IMR-90 (cell line): ENCODE measurements at regions of chr6 and their contacts with region 1.

Region 1: GRCh38 chr6:129989396-129989795 is 29.0 kb upstream of the L3MBTL3 start:
- DNase-seq: no peak
- ATAC-seq: no peak
- H3K4me3 ChIP-seq: no peak overlapping the region
- H3K27ac ChIP-seq: no peak overlapping the region
- H3K4me1 ChIP-seq: no peaks in the 10 kb centered on the region
- H3K27me3 ChIP-seq: peaks cover 4% of the 10 kb centered on the region; the same call in 1 of the 2 replicates
- CTCF ChIP-seq: no peak
- POLR2A ChIP-seq: no peak
- RAD21 ChIP-seq: no peak

Region 2: DNA sequence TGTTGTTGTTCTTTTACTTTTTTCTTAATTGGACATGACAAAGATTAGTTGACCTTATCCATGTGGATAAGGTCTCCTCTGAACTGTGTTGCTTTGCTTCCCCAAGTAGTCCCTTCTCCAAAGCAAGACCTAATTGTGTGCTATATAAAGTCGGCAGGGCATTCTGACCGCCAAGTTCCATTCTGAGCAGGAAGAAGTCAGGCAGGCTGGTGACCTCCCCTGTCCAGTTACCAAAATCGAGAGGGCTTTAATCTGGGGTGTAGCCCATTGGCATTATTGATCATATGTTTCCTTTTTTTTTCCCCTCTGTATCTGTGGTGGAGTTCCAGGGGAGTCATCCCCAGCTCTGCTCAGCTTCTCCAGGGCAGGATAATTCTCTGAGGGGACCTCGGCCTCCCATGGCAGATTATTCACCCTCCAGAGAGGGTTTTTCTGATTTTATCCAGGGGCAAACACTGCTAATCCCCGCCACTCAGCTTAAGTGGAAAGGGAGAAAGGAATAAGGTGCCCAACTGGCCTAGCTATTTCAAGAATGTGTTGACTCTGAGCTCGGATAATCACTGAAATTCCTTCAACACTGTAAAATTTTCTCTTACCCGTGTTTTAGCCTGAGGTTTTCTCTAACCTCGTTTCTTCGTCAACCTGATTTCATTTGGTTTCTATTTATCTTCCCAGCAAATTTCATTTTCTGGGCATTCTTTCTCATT is 42.8 kb before region 1 on chr6:
- CTCF ChIA-PET with region 1: no interaction called
- POLR2A ChIA-PET with region 1: interaction called, 15 read pairs
- dilution Hi-C with region 1: no loop called
- in situ Hi-C with region 1: no loop called
- intact Hi-C with region 1: no loop called
- DNase-seq: no peak
- ATAC-seq: no peak
- H3K4me3 ChIP-seq: no peak overlapping the region
- H3K27ac ChIP-seq: no peak overlapping the region
- H3K4me1 ChIP-seq: no peaks in the 10 kb centered on the region
- H3K27me3 ChIP-seq: no peaks in the 10 kb centered on the region
- CTCF ChIP-seq: no peak
- POLR2A ChIP-seq: no peak
- RAD21 ChIP-seq: no peak

Region 3: DNA sequence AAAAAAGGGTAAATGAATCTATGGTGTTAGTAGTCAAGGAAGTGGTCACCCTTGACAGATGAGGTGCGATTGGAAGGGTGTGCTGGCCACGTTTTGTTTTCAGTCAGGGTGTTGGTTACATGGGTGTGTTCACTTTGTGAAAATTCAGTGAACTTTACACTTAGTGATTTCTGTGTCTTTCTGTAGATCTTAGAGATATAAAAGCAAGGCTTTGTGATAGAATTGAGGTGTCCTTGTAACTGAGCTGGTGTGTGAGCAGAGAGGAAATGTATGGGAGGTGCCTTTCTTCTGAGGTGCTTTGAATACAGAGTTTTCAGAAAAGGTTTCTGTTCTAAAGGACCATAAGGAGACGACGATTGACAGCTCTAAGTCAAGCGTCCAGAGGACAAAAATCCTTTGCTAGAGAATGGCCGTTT is 142.9 kb after region 1 on chr6:
- CTCF ChIA-PET with region 1: no interaction called
- POLR2A ChIA-PET with region 1: no interaction called
- dilution Hi-C with region 1: no loop called
- in situ Hi-C with region 1: no loop called
- intact Hi-C with region 1: no loop called
- DNase-seq: no peak
- ATAC-seq: no peak
- H3K4me3 ChIP-seq: no peak overlapping the region
- H3K27ac ChIP-seq: no peak overlapping the region
- H3K4me1 ChIP-seq: peaks cover 5% of the 10 kb centered on the region; the same call in 1 of the 2 replicates
- H3K27me3 ChIP-seq: no peaks in the 10 kb centered on the region
- CTCF ChIP-seq: no peak
- POLR2A ChIP-seq: no peak
- RAD21 ChIP-seq: no peak